HEK293 (cell line): ENCODE measurements at regions of chr3 and their contacts with region 1.

Region 1: GRCh38 chr3:27134165-27134796 is 234.9 kb downstream of the NEK10 start:
- H3K4me3 ChIP-seq: no peak overlapping the region
- H3K27ac ChIP-seq: no peak overlapping the region
- H3K4me1 ChIP-seq: no peaks in the 10 kb centered on the region
- CTCF ChIP-seq: peak; percentile 35; the same call in 1 of the 2 replicates

Region 2: GRCh38 chr3:27147215-27147614 is 12.9 kb after region 1 on chr3:
- CTCF ChIA-PET with region 1: interaction called, 16 read pairs
- POLR2A ChIA-PET with region 1: no interaction called
- H3K4me3 ChIP-seq: no peak overlapping the region
- H3K27ac ChIP-seq: no peak overlapping the region
- H3K4me1 ChIP-seq: no peaks in the 10 kb centered on the region
- CTCF ChIP-seq: no peak

Region 3: GRCh38 chr3:27253831-27254230 is 119.5 kb after region 1 on chr3:
- CTCF ChIA-PET with region 1: interaction called, 25 read pairs
- POLR2A ChIA-PET with region 1: interaction called, 3 read pairs
- H3K4me3 ChIP-seq: no peak overlapping the region
- H3K27ac ChIP-seq: no peak overlapping the region
- H3K4me1 ChIP-seq: no peaks in the 10 kb centered on the region
- CTCF ChIP-seq: no peak

Region 4: GRCh38 chr3:27279123-27279522 is 144.8 kb after region 1 on chr3:
- CTCF ChIA-PET with region 1: interaction called, 10 read pairs
- POLR2A ChIA-PET with region 1: no interaction called
- H3K4me3 ChIP-seq: no peak overlapping the region
- H3K27ac ChIP-seq: no peak overlapping the region
- H3K4me1 ChIP-seq: no peaks in the 10 kb centered on the region
- CTCF ChIP-seq: no peak